ENCODE measurements at regions of chr16 and their contacts with region 1.

Region 1: DNA sequence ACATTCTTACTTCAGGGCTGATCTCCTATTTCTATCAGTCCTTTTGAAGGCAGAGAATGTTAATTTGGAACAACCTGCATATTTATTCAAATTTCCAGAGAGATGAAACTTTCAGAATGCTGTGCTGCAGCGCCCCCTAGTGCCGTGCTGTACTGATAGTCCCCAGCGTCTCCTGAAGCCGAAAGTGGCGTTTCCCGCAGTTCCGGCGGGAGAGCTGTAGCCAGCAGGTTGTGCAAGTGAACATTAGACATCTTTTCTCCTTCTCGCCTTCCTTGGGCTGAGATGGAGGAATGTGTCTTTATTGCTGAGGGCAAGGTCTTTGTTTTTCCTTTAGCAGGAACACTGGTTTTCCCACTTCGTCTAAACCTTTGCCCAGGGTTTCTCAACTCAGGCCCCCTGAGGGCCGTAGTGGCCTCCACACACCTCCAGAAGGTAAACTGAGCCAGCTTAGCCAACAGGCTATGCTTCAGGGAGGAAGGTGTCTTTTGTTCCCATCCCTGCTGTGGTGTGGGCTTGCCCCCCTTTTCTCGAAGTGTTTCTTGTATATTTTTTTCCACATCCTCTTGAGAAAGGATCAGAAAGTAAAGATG is 26.4 kb downstream of the USP10 start:
- DNase-seq: peak; percentile 89 to 98
- H3K4me3 ChIP-seq: no peak overlapping the region
- CTCF ChIP-seq: peak in 1 of 3 donors; percentile 97
- POLR2A ChIP-seq: no peak

Region 2: DNA sequence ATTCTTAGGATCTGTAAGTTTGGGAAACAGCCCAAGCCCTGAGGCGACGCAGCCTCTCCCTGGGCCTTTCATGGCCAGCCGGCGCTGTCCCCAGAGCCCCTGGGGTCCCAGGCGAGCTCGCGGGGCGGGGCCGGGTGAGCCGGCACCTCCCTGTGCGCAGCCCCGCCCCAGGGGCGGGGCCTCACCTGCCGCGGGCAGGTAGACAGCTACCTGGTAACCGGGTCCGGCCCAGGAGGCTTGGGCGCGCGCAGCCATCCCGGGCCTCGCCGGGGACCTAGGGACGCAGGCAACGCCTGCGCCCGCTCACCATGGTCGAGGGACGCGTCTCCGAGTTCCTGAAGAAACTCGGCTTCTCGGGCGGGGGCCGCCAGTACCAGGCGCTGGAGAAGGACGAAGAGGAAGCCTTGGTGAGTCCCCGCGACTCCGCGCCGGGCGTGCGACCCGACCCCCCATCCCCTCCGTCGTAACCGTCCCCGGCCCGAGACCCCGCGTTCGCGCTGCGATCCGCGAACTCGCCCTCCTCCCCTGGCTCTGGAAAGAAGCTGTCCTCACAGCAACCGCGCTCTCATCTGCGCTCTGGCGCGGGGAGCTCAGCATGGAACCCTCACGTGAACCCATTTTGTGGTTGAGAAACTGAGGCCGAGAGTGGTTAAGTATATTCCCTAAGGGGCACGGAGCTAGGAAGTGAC is 357.7 kb before region 1 on chr16 and contains the start of gene ATP2C2:
- intact Hi-C with region 1: no loop called
- DNase-seq: no peak
- H3K4me3 ChIP-seq: no peak within 1 kb of the TSS
- CTCF ChIP-seq: no peak
- POLR2A ChIP-seq: no peak
- total RNA-seq, gene ATP2C2: 51.7 to 133 (median 57.7) TPM

Region 3: DNA sequence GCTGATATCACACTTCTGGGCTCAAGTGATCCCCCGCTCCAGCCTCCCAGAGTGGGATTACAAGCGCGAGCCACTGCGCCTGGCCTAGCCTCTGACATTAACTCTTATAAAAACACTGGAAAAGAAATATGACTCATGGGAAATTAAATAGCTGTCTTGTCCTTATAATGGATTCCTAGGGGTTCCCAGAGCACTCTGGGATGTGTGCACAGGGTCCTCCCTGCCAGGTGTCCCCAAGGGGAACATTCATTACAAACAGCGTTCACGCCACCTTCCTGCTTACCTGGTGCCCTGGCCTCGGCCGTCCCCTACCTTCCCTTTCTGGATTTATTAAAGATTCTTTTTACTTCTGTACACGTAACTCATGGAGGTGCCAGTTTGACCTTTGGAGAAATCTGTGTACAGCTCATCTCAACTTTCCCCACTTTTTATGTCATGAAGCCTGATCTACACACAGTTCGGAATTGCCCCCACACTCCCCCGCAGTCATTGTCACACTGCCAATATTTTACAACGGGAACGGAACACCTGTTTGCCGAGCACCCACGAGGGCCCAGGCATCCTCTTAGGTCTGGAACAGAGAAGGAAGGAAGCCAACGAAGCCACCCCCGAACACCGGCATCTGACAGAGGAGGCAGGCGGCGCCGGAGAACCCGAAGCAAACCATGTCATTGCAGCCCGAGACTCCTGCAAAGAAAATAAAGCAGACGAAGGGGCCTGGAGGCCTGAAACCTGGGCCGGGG is 182.0 kb before region 1 on chr16:
- intact Hi-C with region 1: no loop called
- DNase-seq: no peak
- H3K4me3 ChIP-seq: no peak overlapping the region
- CTCF ChIP-seq: no peak
- POLR2A ChIP-seq: no peak

Region 4: DNA sequence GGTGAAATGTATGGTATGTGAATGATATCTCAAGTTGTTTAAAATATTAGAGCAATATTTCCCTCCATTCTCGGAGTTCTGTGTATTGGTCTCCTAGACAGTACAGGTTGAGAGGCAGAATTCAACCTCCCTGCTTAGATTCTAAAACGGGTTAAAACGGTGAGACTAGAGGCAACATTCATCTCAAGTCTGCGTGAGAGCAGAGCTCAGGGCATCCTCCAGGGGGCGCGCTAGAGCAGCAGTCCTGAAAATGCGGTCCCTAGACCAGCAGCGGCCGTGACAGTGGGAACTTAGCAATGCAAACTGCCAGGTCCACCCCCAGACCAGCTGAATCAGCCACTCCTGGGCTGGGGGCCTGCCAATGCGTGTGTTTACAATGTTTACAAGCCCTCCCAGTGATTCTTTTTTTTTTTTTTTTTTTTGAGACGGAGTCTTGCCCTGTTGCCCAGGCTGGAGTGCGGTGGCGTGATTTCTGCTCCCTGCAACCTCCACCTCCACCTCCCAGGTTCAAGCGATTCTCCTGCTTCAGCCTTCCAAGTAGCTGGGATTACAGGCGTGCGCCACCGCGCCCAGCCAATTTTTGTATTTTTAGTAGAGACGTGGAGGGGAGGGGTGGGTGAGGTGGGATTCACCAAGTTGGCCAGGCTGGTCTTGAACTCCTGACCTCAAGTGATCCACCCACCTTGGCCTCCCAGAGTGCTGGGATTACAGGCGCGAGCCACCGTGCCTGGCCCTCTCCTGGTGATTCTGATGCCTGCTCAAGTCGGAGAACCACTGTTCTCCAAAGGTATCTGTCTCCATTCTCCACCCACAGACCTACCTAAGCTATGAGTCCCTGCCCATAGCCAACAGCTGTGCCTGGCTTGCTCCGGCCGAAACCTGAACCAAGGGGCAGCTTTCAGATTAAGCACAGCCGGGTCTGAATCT is 53.6 kb before region 1 on chr16:
- intact Hi-C with region 1: loop called (anchors 10 kb)
- DNase-seq: peak; percentile 55 to 95
- H3K4me3 ChIP-seq: no peak overlapping the region
- CTCF ChIP-seq: peak in 1 of 3 donors; percentile 36
- POLR2A ChIP-seq: no peak

Region 5: DNA sequence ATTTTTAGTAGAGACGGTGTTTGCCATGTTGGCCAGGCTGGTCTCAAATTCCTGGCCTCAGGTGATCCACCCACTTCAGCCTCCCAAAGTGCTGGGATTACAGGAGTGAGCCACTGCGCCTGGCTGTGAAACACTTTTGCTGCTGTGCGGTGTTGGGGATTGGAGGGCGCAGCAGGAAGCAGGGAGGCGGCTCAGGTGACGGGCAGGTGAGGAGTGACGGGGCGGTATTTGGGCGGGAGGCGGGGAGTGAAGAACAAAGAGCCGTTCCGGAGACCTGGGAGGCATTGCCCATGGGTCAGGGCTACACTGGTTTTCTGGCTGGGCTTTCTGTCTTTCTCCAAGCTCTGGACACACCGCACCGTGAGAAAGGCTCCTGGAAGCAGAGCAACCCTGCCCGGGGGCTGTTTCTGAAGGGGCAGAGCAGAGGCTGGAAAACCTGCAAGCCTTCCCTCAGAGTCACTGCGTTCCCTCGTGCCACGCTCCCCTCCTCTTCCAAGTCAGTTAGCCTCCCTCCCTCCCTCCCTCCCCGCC is 115.7 kb after region 1 on chr16:
- intact Hi-C with region 1: no loop called
- DNase-seq: no peak
- H3K4me3 ChIP-seq: no peak overlapping the region
- CTCF ChIP-seq: no peak
- POLR2A ChIP-seq: no peak

Region 6: DNA sequence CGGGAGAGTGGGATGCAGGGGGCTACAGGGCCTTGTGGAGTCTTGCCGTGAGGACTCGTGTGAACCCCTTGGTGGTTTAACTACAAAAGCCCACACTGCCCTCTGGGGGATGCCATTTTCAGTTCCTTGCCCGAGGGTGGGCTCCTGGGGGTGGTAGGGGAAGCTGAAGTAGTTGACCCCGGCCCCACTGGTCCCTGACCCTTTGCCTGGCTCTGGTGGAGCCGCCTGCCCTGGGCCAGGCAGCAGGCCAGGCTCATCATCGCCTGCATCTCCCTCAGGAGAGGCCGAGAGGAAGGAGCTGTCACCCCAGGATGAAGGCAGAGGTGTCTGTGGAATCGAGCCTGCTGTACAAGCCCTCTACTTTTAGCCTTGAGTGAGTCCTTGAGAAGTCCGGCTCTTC is 1083.5 kb after region 1 on chr16:
- intact Hi-C with region 1: no loop called
- DNase-seq: no peak
- H3K4me3 ChIP-seq: no peak overlapping the region
- CTCF ChIP-seq: no peak
- POLR2A ChIP-seq: no peak